BJ (cell line): ENCODE measurements at regions of chr1 and their contacts with region 1.

Region 1: DNA sequence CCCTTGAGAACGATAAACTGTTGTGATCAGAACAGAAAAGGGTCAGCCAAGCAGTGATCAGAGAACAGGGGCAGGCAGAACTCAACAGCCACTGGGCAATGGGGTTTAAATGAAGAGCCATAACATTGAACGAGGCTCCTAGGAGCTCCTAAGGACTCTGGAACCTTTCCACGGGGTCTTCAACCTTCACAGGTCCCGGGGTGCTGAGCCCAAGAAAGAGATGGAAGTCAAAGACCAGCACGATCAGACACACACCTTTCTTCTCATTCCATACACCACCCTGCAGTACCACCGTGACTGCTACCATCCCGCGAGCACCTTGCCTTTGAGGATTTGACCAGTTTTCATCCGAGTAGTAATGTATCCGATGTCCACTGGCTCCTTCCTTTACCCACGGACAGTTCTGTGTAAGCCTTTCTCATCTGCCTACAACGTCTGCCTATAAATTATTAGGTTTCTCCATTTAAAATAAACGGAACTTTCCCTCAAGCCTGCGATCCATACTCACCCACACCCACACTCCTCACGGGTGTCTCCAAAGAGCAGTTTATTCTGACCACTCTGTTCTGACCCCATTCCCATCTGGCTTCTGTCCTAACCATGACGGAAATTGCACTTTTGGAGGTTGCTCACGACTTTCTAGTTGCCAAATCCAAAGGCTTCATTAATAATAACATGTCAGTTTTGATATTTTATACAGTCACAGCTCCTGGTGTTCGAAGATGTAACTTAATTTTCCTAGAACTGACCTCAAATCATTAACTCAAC is 16.8 kb upstream of the HHAT start:
- DNase-seq: no peak
- H3K4me3 ChIP-seq: peak overlapping the region; percentile 46; the same call in 1 of the 2 replicates
- H3K27me3 ChIP-seq: peaks cover 2% of the 10 kb centered on the region; the same call in 1 of the 2 replicates
- CTCF ChIP-seq: no peak

Region 2: GRCh38 chr1:210099921-210100320 is 212.0 kb before region 1 on chr1:
- CTCF ChIA-PET with region 1: no interaction called
- POLR2A ChIA-PET with region 1: no interaction called
- DNase-seq: no peak
- H3K4me3 ChIP-seq: no peak overlapping the region
- H3K27me3 ChIP-seq: no peaks in the 10 kb centered on the region
- CTCF ChIP-seq: no peak

Region 3: DNA sequence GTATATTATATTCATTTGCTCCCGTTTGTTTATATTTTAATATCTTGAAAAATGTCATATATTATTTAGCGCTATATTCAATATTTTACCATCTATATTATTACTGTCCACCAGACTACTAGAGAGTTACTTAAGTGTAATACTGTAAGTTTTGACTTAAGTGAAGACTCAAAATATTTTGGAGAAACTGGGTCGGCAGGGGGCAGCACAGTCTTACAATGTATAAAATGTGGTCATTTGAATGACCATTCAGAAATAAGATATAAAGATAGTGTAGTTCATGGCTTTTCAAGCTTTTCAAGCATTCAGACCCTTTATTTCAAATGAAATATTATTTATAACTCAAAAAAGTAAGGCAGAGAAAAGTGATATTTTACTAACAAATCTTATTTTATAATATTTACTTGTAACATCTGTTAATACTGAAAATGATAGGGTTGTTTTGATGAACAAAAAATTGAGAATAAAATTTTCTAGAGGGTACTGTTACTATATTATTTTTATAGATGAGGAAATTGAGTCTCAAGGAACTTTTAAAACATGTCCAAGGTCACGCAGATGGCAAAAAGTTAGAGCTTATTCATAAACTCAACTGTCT is 168.3 kb before region 1 on chr1:
- CTCF ChIA-PET with region 1: interaction called, 73 read pairs
- POLR2A ChIA-PET with region 1: no interaction called
- DNase-seq: peak; percentile 37
- H3K4me3 ChIP-seq: no peak overlapping the region
- H3K27me3 ChIP-seq: no peaks in the 10 kb centered on the region
- CTCF ChIP-seq: peak; percentile 54

Region 4: DNA sequence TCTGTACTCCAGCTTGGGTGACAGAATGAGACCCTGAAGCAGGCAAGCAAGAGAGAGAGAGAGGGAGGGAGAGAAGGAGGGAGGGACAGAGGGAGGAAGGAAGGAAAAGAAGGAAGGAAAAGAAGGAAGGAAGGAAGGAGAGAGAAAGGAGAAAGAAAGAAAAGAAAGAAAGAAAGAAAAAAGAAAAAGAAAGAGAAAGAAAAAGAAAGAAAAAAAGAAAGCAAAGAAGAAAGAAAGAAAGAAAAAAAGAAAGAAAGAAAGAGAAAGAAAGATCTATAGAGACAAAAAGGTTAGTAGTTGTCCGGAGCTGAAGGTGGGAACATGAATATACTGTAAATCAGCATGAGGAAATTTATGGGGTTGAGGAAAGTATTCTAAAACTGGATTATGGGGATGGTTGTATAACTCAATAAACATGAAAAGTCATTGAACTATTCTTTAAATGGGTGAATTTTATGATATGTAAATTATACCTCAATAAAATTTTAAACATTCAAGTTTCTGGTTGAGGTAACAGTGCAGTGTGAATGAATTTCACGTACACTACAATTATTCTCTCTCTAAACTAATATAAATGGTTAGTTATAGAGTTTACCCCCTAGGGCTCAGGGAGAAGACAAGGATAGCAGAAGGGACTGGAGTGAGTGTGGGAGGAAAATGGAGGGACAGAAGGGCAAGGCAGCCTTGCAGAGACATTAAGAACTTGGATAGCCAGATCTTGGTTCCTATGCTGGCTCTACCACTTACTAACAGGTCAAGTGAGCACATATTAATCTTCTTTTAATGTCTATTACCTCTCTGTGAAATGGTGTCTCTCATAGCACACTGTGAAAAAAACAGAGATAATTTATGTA is 104.1 kb before region 1 on chr1:
- CTCF ChIA-PET with region 1: no interaction called
- POLR2A ChIA-PET with region 1: no interaction called
- DNase-seq: no peak
- H3K4me3 ChIP-seq: no peak overlapping the region
- H3K27me3 ChIP-seq: no peaks in the 10 kb centered on the region
- CTCF ChIP-seq: no peak

Region 5: DNA sequence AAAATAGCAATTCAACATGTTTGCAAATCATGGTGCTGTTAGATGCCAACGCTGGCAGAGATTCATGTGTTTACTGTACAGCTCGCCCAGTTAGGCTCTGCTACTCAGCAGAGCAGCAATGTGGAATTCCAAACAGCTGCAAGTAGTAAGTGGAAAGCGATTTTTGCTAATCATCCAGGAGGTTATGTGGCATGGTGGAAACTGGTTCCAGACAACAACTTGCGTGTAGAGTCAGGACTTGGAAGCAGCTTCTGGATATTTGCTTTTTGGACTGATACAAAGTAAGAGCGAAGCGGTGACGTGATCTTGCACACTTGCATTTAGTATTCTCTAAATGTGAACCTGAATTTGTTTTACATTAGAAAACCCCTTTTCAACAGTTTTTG is 10.3 kb before region 1 on chr1:
- CTCF ChIA-PET with region 1: interaction called, 17 read pairs
- POLR2A ChIA-PET with region 1: no interaction called
- DNase-seq: no peak
- H3K4me3 ChIP-seq: no peak overlapping the region
- H3K27me3 ChIP-seq: no peaks in the 10 kb centered on the region
- CTCF ChIP-seq: no peak